ENCODE measurements at regions of chr16 and their contacts with region 1.

Region 1: DNA sequence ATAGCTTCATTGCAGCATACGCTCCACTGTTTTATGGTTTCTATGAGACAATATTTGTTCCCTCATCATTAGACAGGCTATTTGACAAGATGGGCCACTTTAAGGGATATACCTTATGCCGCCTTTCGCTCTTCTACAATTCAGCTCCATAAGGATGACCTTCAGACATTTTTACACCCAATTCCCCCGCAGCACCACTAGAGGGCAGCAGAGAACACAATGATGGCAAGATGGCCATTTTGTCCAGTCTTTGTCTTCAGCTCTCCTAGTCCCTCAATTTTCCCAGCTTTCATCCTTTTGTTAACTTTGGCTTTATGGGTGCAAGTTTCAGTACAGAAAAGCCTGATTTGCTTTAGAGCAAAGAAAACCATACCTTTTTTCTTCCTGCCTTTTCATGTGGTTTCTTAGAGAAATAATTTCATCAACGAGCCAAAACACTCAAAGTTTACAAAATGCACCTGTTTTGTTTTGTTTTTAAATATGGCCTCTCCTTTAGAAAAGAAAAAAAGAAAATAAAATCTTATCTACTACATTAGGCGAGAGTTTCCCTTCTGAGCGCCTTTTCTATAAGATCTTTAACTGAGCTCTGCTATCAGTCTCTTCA is 355.3 kb downstream of the TOX3 start:
- DNase-seq: peak; percentile 91
- H3K4me3 ChIP-seq: no peak overlapping the region
- H3K27ac ChIP-seq: no peak overlapping the region
- H3K4me1 ChIP-seq: no peaks in the 10 kb centered on the region
- H3K27me3 ChIP-seq: no peaks in the 10 kb centered on the region
- CTCF ChIP-seq: peak; percentile 80 to 94 (median 89)
- EP300 ChIP-seq: no peak
- POLR2A ChIP-seq: no peak

Region 2: GRCh38 chr16:52035436-52035835 is 156.2 kb before region 1 on chr16:
- intact Hi-C with region 1: no loop called
- DNase-seq: no peak
- H3K4me3 ChIP-seq: no peak overlapping the region
- H3K27ac ChIP-seq: no peak overlapping the region
- H3K4me1 ChIP-seq: no peaks in the 10 kb centered on the region
- H3K27me3 ChIP-seq: no peaks in the 10 kb centered on the region
- CTCF ChIP-seq: no peak
- EP300 ChIP-seq: no peak
- POLR2A ChIP-seq: no peak

Region 3: GRCh38 chr16:52526116-52526828 is 334.6 kb after region 1 on chr16:
- intact Hi-C with region 1: no loop called
- DNase-seq: no peak
- H3K4me3 ChIP-seq: no peak overlapping the region
- H3K27ac ChIP-seq: no peak overlapping the region
- H3K4me1 ChIP-seq: no peaks in the 10 kb centered on the region
- H3K27me3 ChIP-seq: no peaks in the 10 kb centered on the region
- CTCF ChIP-seq: no peak
- EP300 ChIP-seq: no peak
- POLR2A ChIP-seq: no peak

Region 4: GRCh38 chr16:52912565-52913173 is 721.0 kb after region 1 on chr16:
- intact Hi-C with region 1: loop called (anchors 5 kb)
- DNase-seq: no peak
- H3K4me3 ChIP-seq: no peak overlapping the region
- H3K27ac ChIP-seq: no peak overlapping the region
- H3K4me1 ChIP-seq: no peaks in the 10 kb centered on the region
- H3K27me3 ChIP-seq: no peaks in the 10 kb centered on the region
- CTCF ChIP-seq: peak; percentile 34 to 68 (median 57)
- EP300 ChIP-seq: no peak
- POLR2A ChIP-seq: no peak

Region 5: GRCh38 chr16:53022374-53022773 is 830.7 kb after region 1 on chr16:
- intact Hi-C with region 1: loop called (anchors 5 kb)
- DNase-seq: no peak
- H3K4me3 ChIP-seq: no peak overlapping the region
- H3K27ac ChIP-seq: no peak overlapping the region
- H3K4me1 ChIP-seq: no peaks in the 10 kb centered on the region
- H3K27me3 ChIP-seq: no peaks in the 10 kb centered on the region
- CTCF ChIP-seq: peak; percentile 32 to 46 (median 36)
- EP300 ChIP-seq: no peak
- POLR2A ChIP-seq: no peak